ENCODE measurements at regions of chr15 and their contacts with region 1.

Region 1: DNA sequence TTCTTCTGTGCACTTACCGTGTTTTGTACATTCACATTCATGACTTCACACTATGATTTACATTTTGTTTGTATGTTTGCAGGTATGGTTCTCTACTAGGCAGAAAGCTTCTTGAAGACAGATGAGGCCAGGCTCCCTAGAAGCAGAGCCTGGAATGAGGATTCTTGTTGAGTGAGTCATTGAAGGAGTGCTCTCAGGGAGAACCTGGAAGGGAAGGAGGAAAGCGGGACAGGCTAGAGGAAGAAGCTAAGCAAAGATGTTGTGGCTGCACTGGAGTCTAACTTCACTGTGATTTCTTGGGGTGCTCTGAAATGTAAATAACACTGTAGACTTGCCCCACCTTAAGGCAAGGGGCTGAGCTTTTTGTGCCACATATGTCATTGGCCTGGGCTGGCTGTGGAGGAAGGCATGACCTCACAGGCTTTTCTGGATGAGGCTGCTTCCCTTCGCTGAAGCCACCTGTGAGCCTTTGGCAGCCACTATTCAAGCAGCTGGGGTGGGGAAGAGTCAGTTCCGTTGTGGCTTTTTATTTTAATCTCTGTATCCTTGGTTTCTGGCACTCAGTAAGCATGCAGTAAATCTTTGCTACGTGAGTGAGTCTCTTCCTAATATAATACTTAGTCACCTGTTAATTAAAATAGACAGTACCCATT is 307.3 kb downstream of the SV2B start:
- DNase-seq: peak in 1 of 2 donors; percentile 55
- ATAC-seq: peak; percentile 37 to 83 (median 66)
- H3K4me3 ChIP-seq: no peak overlapping the region
- H3K27ac ChIP-seq: peak overlapping the region in 6 of 10 donors; percentile 22 to 87 (median 84)
- H3K4me1 ChIP-seq: peaks cover 0 to 28% (median 19%) of the 10 kb centered on the region in 9 donors
- H3K27me3 ChIP-seq: no peaks in the 10 kb centered on the region
- CTCF ChIP-seq: no peak

Region 2: GRCh38 chr15:91383532-91383931 is 23.8 kb before region 1 on chr15:
- intact Hi-C with region 1: loop called in 1 of 10 experiments (anchors 2 kb)
- DNase-seq: no peak
- ATAC-seq: no peak
- H3K4me3 ChIP-seq: no peak overlapping the region
- H3K27ac ChIP-seq: no peak overlapping the region
- H3K4me1 ChIP-seq: peaks cover 0 to 6% (median 0%) of the 10 kb centered on the region in 9 donors
- H3K27me3 ChIP-seq: no peaks in the 10 kb centered on the region
- CTCF ChIP-seq: no peak